Posterior vena cava (tissue), 2 donors: ENCODE measurements at regions of chr9 and their contacts with region 1.

Region 1: GRCh38 chr9:126939821-126940221 is 25.2 kb downstream of the RALGPS1 start:
- DNase-seq: no peak

Region 2: GRCh38 chr9:127330501-127330900 is 390.7 kb after region 1 on chr9:
- intact Hi-C with region 1: no loop called
- DNase-seq: no peak

Region 3: GRCh38 chr9:127370672-127371648 is 431.1 kb after region 1 on chr9:
- intact Hi-C with region 1: loop called in 1 of 2 experiments (anchors 10 kb)
- DNase-seq: no peak